ENCODE measurements at regions of chr1 and their contacts with region 1.

Region 1: GRCh38 chr1:84122780-84123382 is 21.2 kb upstream of the PRKACB start:
- DNase-seq: peak; percentile 20 to 69 (median 31)
- H3K4me3 ChIP-seq: no peak overlapping the region
- H3K4me3 Mint-ChIP-seq: no peak overlapping the region
- H3K27ac ChIP-seq: no peak overlapping the region
- H3K27ac Mint-ChIP-seq: no peak overlapping the region
- H3K4me1 ChIP-seq: no peaks in the 10 kb centered on the region
- H3K4me1 Mint-ChIP-seq: no peaks in the 10 kb centered on the region
- H3K27me3 ChIP-seq: no peaks in the 10 kb centered on the region
- H3K27me3 Mint-ChIP-seq: peaks cover 0 to 1% of the 10 kb centered on the region in 2 donors

Region 2: DNA sequence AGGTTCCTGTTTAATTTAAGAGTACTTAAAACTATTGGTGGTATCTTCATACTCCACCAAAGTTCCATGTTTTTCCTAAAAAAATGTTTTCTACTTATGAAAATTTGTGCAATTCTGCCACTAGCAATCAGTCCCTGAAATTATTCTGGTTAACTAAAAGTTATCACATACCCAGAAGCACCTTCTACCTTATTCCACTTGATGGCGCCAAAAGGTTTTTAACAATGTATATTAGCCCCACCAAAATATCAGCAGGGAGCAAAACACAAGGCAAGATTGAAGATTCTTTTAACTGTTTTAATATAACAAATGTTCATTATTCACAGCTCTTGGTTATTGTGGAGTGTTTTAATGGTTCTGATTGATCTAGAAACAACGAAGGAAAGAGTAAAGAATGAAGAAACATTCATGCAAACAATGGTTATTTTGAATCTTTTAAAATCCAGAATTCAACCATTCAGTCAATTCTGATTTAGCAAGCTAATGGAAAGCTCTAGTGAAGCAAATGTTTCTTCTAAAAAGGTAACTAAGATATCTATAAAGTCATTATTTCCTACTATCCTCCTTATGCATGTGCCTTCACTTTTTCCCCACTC is 191.1 kb before region 1 on chr1:
- CTCF ChIA-PET with region 1: interaction called, 26 read pairs
- POLR2A ChIA-PET with region 1: no interaction called
- DNase-seq: peak in 2 of 5 donors; percentile 31 to 37
- H3K4me3 ChIP-seq: no peak overlapping the region
- H3K4me3 Mint-ChIP-seq: no peak overlapping the region
- H3K27ac ChIP-seq: no peak overlapping the region
- H3K27ac Mint-ChIP-seq: no peak overlapping the region
- H3K4me1 ChIP-seq: no peaks in the 10 kb centered on the region
- H3K4me1 Mint-ChIP-seq: no peaks in the 10 kb centered on the region
- H3K27me3 ChIP-seq: no peaks in the 10 kb centered on the region
- H3K27me3 Mint-ChIP-seq: peaks cover 0 to 5% of the 10 kb centered on the region in 2 donors

Region 3: GRCh38 chr1:84090447-84091245 is 32.2 kb before region 1 on chr1:
- CTCF ChIA-PET with region 1: no interaction called
- POLR2A ChIA-PET with region 1: no interaction called
- DNase-seq: peak in 2 of 5 donors; percentile 40 to 57
- H3K4me3 ChIP-seq: peak overlapping the region; percentile 58
- H3K4me3 Mint-ChIP-seq: peak overlapping the region; percentile 59 to 87 (median 82)
- H3K27ac ChIP-seq: peak overlapping the region; percentile 0
- H3K27ac Mint-ChIP-seq: peak overlapping the region; percentile 86 to 95 (median 92)
- H3K4me1 ChIP-seq: peaks cover 19% of the 10 kb centered on the region
- H3K4me1 Mint-ChIP-seq: peaks cover 20 to 37% (median 32%) of the 10 kb centered on the region in 3 donors
- H3K27me3 ChIP-seq: no peaks in the 10 kb centered on the region
- H3K27me3 Mint-ChIP-seq: no peaks in the 10 kb centered on the region

Measured in CD8-positive, alpha-beta memory T cell (primary cell).